ENCODE measurements at regions of chr12 and their contacts with region 1.

Region 1: GRCh38 chr12:14257734-14258574 is 107.5 kb upstream of the ATF7IP start:
- DNase-seq: peak; percentile 95
- ATAC-seq: peak; percentile 78
- H3K4me3 Mint-ChIP-seq: peak overlapping the region; percentile 52
- H3K27ac Mint-ChIP-seq: peak overlapping the region; percentile 92
- H3K4me1 Mint-ChIP-seq: peaks cover 46% of the 10 kb centered on the region
- H3K27me3 Mint-ChIP-seq: no peaks in the 10 kb centered on the region
- CTCF ChIP-seq: no peak

Region 2: DNA sequence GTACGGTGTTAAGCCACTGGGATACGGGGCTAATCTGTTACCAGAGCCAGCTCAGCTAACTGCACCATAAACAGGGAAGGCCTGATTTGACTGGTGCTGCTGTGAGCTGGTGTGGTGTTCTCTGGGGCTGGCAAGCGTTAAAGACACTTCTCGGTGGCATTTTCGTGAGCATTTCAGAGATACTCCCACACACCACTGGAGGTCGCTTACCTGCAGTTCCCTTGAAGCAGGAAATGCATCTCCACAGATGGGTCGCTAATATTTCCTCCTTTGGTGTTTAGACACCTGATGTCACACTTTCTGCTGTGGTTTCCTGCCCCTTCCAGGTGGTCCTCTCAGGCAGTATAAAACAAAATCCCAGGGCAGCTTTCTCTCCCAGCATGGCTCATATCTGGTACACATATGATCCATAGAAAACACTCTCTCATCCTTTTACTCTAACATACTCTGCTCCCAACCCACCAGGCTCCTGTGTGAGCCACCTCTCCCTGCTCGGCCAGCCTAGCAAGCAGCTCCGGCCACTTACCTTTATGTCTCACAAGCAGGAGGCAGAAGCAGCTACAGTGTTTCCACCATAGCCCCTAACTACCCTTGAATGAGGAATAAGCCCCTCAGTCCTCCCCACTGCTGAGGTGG is 146.6 kb before region 1 on chr12:
- CTCF ChIA-PET with region 1: no interaction called
- POLR2A ChIA-PET with region 1: no interaction called
- intact Hi-C with region 1: no loop called
- DNase-seq: peak; percentile 8
- ATAC-seq: peak; percentile 60
- H3K4me3 Mint-ChIP-seq: no peak overlapping the region
- H3K27ac Mint-ChIP-seq: no peak overlapping the region
- H3K4me1 Mint-ChIP-seq: peaks cover 3% of the 10 kb centered on the region
- H3K27me3 Mint-ChIP-seq: peaks cover 22% of the 10 kb centered on the region
- CTCF ChIP-seq: no peak

Region 3: GRCh38 chr12:14193639-14194038 is 64.3 kb before region 1 on chr12:
- CTCF ChIA-PET with region 1: no interaction called
- POLR2A ChIA-PET with region 1: no interaction called
- intact Hi-C with region 1: no loop called
- DNase-seq: no peak
- ATAC-seq: no peak
- H3K4me3 Mint-ChIP-seq: no peak overlapping the region
- H3K27ac Mint-ChIP-seq: no peak overlapping the region
- H3K4me1 Mint-ChIP-seq: no peaks in the 10 kb centered on the region
- H3K27me3 Mint-ChIP-seq: peaks cover 3% of the 10 kb centered on the region
- CTCF ChIP-seq: no peak

Region 4: DNA sequence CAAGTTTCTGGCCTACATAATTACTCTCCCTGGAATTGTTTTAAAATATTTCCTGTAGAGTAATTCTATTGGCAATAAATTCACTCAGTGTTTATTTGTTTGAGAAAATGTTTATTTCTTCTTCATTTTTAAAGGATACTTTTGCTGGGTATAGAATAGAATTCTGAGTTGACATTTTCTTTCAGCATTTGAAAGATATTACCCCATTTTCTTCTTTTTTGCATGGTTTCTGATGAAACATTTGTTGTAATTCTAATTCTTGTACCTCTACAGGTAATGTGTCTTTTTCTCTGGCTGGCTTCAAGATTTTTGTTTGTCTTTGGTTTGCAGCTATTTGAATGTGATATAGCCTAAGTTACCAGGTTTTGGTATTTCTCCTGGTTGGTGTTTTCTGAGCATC is 82.4 kb after region 1 on chr12:
- CTCF ChIA-PET with region 1: no interaction called
- POLR2A ChIA-PET with region 1: no interaction called
- intact Hi-C with region 1: no loop called
- DNase-seq: no peak
- ATAC-seq: no peak
- H3K4me3 Mint-ChIP-seq: no peak overlapping the region
- H3K27ac Mint-ChIP-seq: no peak overlapping the region
- H3K4me1 Mint-ChIP-seq: no peaks in the 10 kb centered on the region
- H3K27me3 Mint-ChIP-seq: no peaks in the 10 kb centered on the region
- CTCF ChIP-seq: no peak

Region 5: DNA sequence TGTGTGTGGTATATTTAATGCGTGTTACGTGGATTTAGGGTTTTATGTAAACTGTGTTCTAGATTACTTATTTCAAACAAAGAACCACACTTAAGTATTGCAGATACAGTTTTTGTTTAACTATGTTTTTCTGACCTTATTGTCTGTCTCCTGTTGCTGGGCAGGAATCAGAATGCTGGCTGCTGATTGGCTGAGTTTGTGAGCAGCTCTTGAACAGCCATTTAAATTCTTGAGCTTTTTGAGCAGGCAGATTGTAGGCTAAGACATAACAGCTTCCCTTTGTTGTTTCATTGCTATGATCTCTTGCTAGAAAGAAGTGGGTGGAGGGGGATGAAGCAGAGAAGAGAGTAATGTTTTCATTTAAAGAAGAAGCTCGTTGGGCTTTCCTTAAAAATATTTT is 159.8 kb after region 1 on chr12:
- CTCF ChIA-PET with region 1: interaction called, 9 read pairs
- POLR2A ChIA-PET with region 1: no interaction called
- intact Hi-C with region 1: loop called (anchors 2 kb)
- DNase-seq: peak; percentile 90
- ATAC-seq: peak; percentile 82
- H3K4me3 Mint-ChIP-seq: peak overlapping the region; percentile 63
- H3K27ac Mint-ChIP-seq: peak overlapping the region; percentile 91
- H3K4me1 Mint-ChIP-seq: peaks cover 59% of the 10 kb centered on the region
- H3K27me3 Mint-ChIP-seq: no peaks in the 10 kb centered on the region
- CTCF ChIP-seq: no peak

Region 6: GRCh38 chr12:14776236-14776961 is 518.4 kb after region 1 on chr12:
- CTCF ChIA-PET with region 1: no interaction called
- POLR2A ChIA-PET with region 1: no interaction called
- intact Hi-C with region 1: no loop called
- DNase-seq: no peak
- ATAC-seq: no peak
- H3K4me3 Mint-ChIP-seq: peak overlapping the region; percentile 92
- H3K27ac Mint-ChIP-seq: no peak overlapping the region
- H3K4me1 Mint-ChIP-seq: peaks cover 35% of the 10 kb centered on the region
- H3K27me3 Mint-ChIP-seq: no peaks in the 10 kb centered on the region
- CTCF ChIP-seq: peak; percentile 36